ENCODE measurements at regions of chr9 and their contacts with region 1.

Region 1: DNA sequence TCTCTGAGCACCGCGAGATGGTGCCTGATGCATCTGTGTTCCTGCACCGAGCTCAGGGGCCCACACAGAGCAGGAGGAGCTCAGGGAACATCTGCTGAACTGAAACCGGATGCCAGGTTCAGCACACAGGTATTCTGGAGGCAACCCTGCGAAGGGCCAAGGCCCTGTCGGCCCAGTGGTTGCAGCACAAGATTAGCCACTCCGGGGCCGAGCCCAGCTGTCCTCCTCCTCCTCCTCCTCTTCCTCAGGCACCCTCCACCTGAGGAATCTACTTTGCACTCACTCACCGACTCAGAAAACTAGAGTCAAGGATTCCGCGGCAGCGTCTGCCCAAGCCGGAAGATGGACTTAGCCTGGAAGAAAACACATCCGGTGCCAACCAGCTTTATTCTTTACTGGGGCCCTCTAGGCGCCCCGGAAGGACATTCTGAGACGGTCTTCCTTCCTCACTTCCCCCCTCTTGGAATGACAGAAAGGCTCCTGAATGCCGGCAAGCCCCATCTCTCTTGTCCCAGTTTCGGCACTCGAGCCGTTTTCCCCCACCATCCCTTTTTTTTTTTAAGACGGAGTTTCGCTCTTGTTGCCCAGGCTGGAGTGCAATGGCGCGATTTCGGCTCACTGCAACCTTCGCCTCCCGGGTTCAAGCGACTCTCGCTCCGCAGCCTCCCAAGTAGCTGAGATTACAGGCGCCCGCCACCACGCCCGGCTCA is at the start of gene ZBTB6:
- DNase-seq: peak; percentile 81
- ATAC-seq: peak; percentile 98
- H3K4me3 Mint-ChIP-seq: peak within 1 kb of the TSS; percentile 100
- H3K27ac Mint-ChIP-seq: peak within 1 kb of the TSS; percentile 100
- H3K4me1 Mint-ChIP-seq: peaks cover 31% of the 10 kb centered on the region
- H3K27me3 Mint-ChIP-seq: no peaks in the 10 kb centered on the region
- total RNA-seq, gene ZBTB6: 9.1 to 9.3 TPM

Region 2: GRCh38 chr9:122642226-122642625 is 270.9 kb before region 1 on chr9:
- CTCF ChIA-PET with region 1: no interaction called
- POLR2A ChIA-PET with region 1: no interaction called
- DNase-seq: peak; percentile 21
- ATAC-seq: no peak
- H3K4me3 Mint-ChIP-seq: no peak overlapping the region
- H3K27ac Mint-ChIP-seq: no peak overlapping the region
- H3K4me1 Mint-ChIP-seq: no peaks in the 10 kb centered on the region
- H3K27me3 Mint-ChIP-seq: peaks cover 3% of the 10 kb centered on the region

Region 3: DNA sequence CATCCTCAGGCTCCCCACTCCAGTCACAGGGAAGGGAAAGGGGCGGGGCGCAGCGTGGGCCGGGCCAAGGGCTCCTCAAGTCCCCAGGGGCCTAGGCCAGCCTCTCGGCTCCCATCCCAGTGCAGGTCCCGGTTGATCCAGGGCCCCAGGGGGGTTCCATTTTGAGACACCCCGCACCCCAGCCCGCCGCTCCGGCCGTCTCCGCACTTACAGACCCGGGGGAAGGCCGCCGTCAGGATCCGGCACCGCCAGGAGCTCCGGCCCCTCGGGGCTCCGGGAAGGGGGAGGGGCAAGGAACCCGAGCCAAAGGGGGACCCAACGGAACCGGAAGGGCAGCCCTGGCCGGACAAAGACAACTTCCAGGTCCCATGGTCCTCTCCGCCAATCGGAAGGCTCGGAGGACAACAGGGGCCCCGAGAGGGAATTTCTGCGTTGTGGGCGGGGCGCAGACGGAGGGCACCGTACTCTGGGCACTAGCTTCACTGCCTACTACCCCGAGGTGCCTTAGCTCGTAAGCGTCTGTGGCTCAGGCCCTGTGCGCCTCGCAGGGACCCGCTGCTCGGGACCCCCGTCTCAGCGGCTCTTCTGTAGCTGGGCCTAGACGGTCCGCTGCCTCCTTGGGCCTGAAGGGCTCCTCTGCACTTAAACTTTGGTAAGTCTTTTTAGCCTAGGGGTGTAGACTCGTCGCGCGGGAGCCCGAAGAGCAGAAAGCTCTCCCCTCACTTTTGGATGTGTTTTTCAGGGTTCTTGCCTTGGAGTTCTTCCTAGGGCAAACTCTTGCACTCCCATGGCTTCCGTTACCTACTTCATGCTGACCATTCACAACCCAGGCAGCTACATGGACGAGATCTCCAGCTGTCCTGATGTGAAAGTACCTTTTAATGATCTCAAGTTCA is 18.4 kb after region 1 on chr9 and contains the start of gene ZBTB26:
- CTCF ChIA-PET with region 1: interaction called, 7 read pairs
- POLR2A ChIA-PET with region 1: interaction called, 36 read pairs
- DNase-seq: peak; percentile 91
- ATAC-seq: peak; percentile 98
- H3K4me3 Mint-ChIP-seq: no peak within 1 kb of the TSS
- H3K27ac Mint-ChIP-seq: peak within 1 kb of the TSS; percentile 90
- H3K4me1 Mint-ChIP-seq: peaks cover 12% of the 10 kb centered on the region
- H3K27me3 Mint-ChIP-seq: no peaks in the 10 kb centered on the region
- total RNA-seq, gene ZBTB26: 6.6 to 7.1 TPM

Region 4: DNA sequence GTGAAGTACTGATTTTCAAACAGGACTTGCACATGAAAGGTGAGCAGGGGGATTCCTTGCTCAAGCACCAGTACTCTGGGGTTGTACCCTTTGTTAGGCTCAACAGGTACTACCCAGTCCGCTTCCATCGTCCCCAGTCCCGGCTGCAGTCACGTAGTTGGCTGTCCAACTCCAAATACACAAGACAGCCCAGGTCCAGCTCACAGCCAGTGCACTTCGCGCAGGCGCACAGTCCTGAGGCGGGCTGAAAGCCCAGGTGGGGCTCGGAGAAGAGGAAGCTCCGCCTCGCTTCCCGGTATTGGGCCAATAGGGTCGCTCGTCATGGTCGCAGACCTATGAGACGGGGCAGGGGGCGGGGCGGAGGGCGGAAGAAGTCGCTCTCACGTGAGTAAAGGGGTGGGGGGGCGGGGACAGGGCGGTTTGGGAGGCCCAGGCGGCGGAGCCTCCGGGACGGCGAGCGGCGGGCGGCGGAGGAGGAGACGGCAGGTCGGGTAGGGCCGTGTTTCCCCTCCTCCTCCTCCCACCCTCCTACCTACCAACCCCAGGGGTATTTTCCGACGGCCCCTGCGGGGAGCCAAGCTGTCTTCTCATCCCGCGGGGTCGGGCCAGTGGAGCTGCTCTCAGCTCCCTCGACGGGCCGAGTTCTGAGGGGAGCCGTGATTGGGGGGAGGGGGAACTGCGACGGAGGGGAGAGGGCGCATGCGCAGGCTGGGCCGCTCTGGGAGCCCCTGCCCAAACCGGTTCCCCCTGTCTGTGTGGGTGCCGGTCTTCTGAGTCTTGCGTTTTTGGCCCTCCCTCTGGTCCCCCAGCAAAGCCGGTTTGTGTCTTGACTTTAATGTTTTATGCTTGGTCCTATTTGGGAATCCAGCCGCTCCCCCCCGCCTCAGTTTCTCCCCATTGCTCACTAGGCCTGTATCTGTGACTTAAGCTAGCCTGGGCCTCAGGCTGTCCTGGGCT is 27.8 kb after region 1 on chr9 and contains the start of gene RABGAP1:
- CTCF ChIA-PET with region 1: interaction called, 4 read pairs
- POLR2A ChIA-PET with region 1: interaction called, 12 read pairs
- DNase-seq: peak; percentile 99
- ATAC-seq: peak; percentile 99
- H3K4me3 Mint-ChIP-seq: peak within 1 kb of the TSS; percentile 91
- H3K27ac Mint-ChIP-seq: peak within 1 kb of the TSS; percentile 86
- H3K4me1 Mint-ChIP-seq: peaks cover 35% of the 10 kb centered on the region
- H3K27me3 Mint-ChIP-seq: no peaks in the 10 kb centered on the region
- total RNA-seq, gene RABGAP1: 27.8 to 28.0 TPM

Region 5: GRCh38 chr9:123102375-123103110 is 189.4 kb after region 1 on chr9:
- CTCF ChIA-PET with region 1: no interaction called
- POLR2A ChIA-PET with region 1: no interaction called
- DNase-seq: no peak
- ATAC-seq: no peak
- H3K4me3 Mint-ChIP-seq: no peak overlapping the region
- H3K27ac Mint-ChIP-seq: no peak overlapping the region
- H3K4me1 Mint-ChIP-seq: no peaks in the 10 kb centered on the region
- H3K27me3 Mint-ChIP-seq: no peaks in the 10 kb centered on the region

Measured in activated CD8-positive, alpha-beta T cell treated with anti-CD3 and anti-CD28 coated beads, Interleukin-2, amount 10 ng/mL, durations not matched to agents 7 days and 5 days (primary cell).